ENCODE measurements at regions of chr1 and their contacts with region 1.

Region 1: DNA sequence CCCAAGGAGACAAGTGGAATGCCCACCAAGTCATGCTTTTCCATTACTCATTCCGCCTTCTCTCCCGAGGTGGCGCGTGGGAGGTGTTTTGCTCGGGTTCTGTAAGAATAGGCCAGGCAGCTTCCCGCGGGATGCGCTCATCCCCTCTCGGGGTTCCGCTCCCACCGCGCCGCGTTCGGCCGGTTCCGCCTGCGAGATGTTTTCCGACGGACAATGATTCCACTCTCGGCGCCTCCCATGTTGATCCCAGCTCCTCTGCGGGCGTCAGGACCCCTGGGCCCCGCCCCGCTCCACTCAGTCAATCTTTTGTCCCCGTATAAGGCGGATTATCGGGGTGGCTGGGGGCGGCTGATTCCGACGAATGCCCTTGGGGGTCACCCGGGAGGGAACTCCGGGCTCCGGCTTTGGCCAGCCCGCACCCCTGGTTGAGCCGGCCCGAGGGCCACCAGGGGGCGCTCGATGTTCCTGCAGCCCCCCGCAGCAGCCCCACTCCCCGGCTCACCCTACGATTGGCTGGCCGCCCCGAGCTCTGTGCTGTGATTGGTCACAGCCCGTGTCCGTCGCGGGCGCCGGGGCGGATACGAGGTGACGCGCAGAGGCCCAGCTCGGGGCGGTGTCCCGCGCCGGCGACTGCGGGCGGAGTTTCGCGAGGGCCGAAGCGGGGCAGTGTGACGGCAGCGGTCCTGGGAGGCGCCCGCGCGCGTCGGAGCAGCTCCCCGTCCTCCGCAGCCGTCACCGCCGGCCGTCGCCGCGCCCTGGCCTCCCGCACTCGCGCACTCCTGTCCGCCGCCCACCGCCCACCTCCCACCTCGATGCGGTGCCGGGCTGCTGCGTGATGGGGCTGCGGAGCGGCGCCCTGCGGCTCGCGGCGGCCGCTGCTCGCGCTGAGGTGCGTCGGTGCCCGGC is at the start of gene KIF1B:
- DNase-seq: peak; percentile 96
- H3K4me3 ChIP-seq: peak within 1 kb of the TSS; percentile 99
- H3K27ac ChIP-seq: peak within 1 kb of the TSS; percentile 99
- H3K27me3 ChIP-seq: no peaks in the 10 kb centered on the region
- CTCF ChIP-seq: peak; percentile 92
- polyA plus RNA-seq, gene KIF1B: 25.0 and 26.9 TPM in 2 replicates

Region 2: DNA sequence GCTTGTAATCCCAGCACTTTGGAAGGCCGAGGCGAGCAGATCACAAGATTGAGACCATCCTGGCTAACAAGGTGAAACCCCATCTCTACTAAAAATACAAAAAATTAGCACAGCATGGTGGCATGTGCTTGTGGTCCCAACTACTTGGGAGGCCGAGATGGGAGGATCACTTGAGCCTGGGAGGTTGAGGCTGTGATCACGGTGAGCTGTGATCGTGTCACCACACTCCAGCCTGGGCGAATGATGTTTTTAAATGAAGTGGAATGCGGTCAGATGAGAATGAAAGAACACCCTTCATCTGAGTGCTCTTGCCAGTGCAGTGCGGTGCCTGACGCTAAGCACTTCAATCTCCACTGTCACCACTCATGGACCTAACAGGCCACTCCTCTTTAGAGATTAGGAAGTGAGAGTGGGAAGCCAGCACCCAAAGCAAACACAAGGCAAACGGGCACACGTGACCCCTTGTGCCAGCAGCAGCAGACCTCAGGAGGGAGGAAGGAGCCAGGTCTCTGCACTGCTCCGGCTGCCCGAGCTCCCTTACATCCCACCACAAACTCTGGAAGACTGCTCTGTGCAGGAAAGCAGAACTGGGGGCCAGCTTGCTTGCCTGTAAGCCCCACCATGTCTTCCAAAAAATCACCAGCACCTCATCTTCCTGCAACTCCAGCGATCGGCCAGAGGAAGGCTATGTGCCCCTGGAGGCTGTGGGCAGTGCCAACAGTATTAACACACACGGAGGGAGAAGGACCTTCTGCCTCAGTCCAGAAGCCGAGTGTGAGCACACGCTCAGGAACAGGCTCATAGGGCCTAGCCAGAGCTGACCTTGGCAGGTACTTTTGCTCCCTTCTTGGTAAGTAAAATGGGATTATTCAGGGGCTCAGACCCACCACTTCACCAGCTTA is 309.8 kb before region 1 on chr1:
- CTCF ChIA-PET with region 1: no interaction called
- POLR2A ChIA-PET with region 1: no interaction called
- DNase-seq: no peak
- H3K4me3 ChIP-seq: no peak overlapping the region
- H3K27ac ChIP-seq: no peak overlapping the region
- H3K27me3 ChIP-seq: no peaks in the 10 kb centered on the region
- CTCF ChIP-seq: no peak

Region 3: DNA sequence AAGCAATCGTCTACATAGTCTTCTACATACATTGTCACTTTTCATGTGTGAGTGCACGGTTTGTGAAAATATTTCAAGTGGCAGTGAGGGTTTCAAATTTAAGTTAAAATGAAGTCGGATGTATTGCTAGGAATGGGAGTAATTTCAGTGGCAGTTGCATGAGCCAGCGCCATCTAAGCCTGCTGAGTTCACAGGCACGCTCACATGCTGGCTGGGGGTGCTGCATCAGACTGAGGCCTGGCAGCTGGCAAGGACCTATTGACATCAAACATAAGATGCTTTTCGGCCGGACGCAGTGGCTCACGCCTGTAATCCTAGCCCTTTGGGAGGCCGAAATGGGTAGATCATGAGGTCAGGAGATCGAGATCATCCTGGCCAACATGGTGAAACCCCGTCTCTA is 96.7 kb before region 1 on chr1:
- CTCF ChIA-PET with region 1: no interaction called
- POLR2A ChIA-PET with region 1: no interaction called
- DNase-seq: no peak
- H3K4me3 ChIP-seq: no peak overlapping the region
- H3K27ac ChIP-seq: no peak overlapping the region
- H3K27me3 ChIP-seq: no peaks in the 10 kb centered on the region
- CTCF ChIP-seq: no peak

Region 4: DNA sequence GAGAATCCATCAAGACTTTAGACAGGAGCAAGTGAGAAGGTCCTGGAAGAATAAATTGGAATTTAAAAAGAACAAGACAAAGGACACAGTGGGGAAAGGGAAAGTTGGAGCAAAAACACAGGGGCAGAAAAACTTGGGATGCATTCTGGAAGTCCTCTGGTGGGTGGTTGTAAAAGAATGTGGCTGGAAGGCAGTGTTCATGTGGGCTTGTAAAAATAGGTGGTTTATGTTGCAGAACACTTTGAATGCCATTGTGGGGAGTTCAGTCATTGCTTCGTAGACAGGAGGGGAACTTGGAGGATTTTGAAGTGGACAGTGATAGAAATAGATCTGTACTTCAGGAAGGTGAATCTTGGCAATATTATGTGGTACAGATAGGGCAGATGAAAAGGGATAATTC is 15.4 kb after region 1 on chr1:
- CTCF ChIA-PET with region 1: interaction called, 22 read pairs
- POLR2A ChIA-PET with region 1: interaction called, 5 read pairs
- DNase-seq: no peak
- H3K4me3 ChIP-seq: no peak overlapping the region
- H3K27ac ChIP-seq: no peak overlapping the region
- H3K27me3 ChIP-seq: no peaks in the 10 kb centered on the region
- CTCF ChIP-seq: no peak

Region 5: GRCh38 chr1:10253755-10254154 is 43.6 kb after region 1 on chr1:
- CTCF ChIA-PET with region 1: interaction called, 20 read pairs
- POLR2A ChIA-PET with region 1: interaction called, 6 read pairs
- DNase-seq: peak; percentile 63
- H3K4me3 ChIP-seq: no peak overlapping the region
- H3K27ac ChIP-seq: peak overlapping the region; percentile 31
- H3K27me3 ChIP-seq: no peaks in the 10 kb centered on the region
- CTCF ChIP-seq: no peak

Region 6: DNA sequence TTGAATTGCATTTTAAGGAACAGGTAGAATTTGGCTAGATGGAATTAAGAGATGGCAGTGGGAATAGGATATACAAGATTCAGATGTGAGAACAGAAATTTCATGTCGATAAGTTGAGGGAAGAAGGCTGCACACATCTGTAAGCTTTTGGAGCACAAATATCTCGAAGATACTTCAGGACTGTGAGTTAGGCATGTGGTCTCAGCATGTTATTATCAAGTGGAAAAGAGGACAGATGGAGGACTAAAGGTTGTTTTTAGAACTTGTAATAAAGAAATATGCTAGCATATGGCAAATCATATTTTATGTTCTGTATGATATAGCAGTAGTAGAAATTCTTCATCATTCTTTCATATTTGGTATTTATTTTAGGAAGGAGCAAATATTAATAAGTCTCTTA is 61.7 kb after region 1 on chr1:
- CTCF ChIA-PET with region 1: interaction called, 17 read pairs
- POLR2A ChIA-PET with region 1: no interaction called
- DNase-seq: no peak
- H3K4me3 ChIP-seq: no peak overlapping the region
- H3K27ac ChIP-seq: no peak overlapping the region
- H3K27me3 ChIP-seq: no peaks in the 10 kb centered on the region
- CTCF ChIP-seq: no peak

Region 7: DNA sequence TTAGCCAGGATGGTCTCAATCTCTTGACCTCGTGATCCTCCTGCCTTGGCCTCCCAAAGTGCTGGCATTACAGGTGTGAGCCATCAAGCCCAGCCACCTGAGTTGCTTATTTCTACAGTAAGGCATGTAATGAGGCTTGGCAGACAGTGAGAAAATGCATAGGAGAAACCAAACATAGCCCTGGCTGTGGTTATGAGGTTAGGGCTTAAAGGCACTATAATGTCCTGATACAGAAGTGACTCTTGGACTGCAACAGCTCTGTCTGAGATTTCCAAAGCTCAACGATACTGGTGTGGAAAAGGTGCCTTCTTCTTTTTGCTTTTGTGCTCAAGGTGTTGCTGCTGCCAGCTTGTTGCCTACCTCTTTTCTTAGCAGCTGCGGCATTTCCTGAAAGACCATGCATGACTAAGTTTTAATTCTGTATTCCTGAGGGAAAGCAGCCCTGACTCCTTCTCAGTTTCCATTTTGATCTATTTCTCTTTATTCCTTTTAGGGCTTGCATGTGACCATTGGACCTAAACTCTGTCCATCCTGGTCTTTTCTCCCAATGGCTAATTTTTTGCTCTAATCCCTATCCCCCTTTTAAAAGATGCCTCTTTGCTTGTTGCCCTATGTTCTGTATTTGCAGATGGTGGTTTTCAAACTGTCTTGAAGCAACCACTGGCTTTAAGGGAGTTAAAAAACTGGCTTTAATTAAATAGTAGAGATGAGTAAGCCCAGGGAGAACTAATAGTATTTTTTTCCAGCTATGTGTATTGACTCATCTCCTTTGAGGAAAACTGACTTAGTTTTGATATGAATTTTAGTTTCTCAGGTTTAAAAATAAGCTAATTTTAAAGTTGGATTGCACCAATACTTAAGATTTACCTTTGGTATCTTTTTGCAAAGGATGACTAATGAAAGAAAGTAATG is 70.5 kb after region 1 on chr1:
- CTCF ChIA-PET with region 1: interaction called, 21 read pairs
- POLR2A ChIA-PET with region 1: interaction called, 3 read pairs
- DNase-seq: peak; percentile 7
- H3K4me3 ChIP-seq: no peak overlapping the region
- H3K27ac ChIP-seq: peak overlapping the region; percentile 42
- H3K27me3 ChIP-seq: no peaks in the 10 kb centered on the region
- CTCF ChIP-seq: no peak

Region 8: GRCh38 chr1:10338047-10338446 is 127.9 kb after region 1 on chr1:
- CTCF ChIA-PET with region 1: interaction called, 14 read pairs
- POLR2A ChIA-PET with region 1: interaction called, 4 read pairs
- DNase-seq: no peak
- H3K4me3 ChIP-seq: no peak overlapping the region
- H3K27ac ChIP-seq: no peak overlapping the region
- H3K27me3 ChIP-seq: no peaks in the 10 kb centered on the region
- CTCF ChIP-seq: peak; percentile 65

Region 9: GRCh38 chr1:10679496-10680220 is 469.5 kb after region 1 on chr1:
- CTCF ChIA-PET with region 1: no interaction called
- POLR2A ChIA-PET with region 1: no interaction called
- DNase-seq: peak; percentile 11
- H3K4me3 ChIP-seq: no peak overlapping the region
- H3K27ac ChIP-seq: no peak overlapping the region
- H3K27me3 ChIP-seq: peaks cover 9% of the 10 kb centered on the region
- CTCF ChIP-seq: no peak

Region 10: DNA sequence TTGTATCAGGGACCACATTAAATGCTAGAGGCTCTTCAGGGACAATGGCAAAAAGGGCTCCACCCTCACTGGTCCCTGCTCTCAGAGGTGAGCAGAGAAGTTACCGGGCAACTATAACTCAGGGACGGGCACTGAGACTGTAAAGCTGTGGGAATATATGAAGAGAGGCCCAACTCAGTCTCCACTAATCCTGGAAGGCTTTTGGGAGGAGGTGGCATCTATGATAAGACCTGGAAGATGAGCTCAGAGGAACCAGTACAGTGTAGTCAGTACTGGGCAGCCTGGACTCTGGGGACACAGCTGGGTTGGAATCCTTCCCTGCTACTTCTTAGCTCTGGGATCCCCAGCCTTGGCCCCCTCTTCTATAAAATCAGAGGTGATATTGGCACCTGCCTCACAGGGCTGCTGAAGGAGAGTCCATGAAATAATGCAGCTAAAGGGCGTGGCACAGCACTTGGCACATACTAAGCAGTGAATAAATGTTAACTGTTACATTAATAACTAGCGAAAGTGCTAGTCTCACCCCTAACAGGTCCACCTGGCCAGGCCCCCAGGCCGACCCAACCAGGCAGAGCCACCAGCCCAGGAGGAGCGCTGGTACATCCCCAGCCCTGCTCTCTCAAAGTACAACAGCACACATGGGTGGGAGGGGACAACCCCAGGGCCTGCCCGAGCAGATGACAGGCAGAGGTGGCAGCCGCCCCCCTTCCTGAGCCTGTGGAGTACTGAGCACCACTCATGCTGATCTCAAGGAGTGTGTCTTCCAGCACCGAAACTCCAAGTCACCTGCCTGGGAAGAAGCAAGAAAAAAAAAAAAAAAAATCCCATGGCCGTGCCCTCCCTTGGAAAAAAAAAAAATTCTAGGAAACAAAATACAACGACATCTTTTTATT is 523.6 kb after region 1 on chr1:
- CTCF ChIA-PET with region 1: no interaction called
- POLR2A ChIA-PET with region 1: no interaction called
- DNase-seq: no peak
- H3K4me3 ChIP-seq: no peak overlapping the region
- H3K27ac ChIP-seq: no peak overlapping the region
- H3K27me3 ChIP-seq: peaks cover 25% of the 10 kb centered on the region
- CTCF ChIP-seq: no peak